HepG2 (cell line): ENCODE measurements at regions of chr5 and their contacts with region 1.

Region 1: DNA sequence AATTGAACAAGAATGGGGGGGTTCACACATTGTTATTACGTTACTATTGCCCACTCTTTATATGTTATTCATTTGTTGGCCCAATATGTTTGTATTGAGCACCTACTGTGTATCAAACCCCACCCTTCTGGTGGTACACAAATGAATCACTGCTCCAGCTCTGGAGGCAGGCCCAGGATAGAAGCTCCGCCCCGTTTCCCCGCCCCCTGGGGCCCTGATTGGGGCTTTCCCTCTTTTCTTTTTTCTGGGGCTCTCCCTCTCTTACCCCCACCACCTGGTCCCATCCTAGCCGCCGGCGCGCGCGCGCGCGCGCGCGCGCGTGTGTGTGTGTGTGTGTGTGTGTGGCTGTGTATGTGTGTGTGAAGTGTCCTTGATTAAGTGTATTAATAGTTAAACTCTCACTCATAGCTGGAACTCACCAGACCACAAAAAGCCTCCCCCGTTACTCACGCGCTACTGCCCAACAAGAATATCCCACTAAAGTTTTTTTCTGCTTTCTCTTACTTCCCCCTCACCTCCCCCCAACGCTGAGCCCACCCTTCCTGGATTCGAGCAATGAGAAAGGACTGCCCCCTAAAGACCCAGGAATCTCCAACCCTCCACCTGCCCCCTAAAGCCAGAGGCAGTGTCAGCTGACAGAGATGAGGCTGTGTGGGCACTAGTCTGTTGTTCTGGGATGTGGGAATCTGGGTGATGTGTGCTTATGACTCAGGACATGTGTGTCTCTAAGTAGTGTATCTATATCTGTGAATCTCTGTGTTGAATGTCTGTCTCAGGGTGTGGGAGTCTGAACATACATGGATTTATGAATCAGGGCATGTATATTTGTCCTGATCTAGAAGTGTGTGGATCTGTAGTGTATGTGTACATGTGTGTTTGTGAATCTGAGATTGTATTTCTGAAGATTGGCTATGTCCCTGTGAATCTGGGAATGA is 4.0 kb downstream of the CXXC5 start:
- DNase-seq: no peak
- ATAC-seq: no peak
- H3K4me3 ChIP-seq: peak overlapping the region; percentile 41 to 74 (median 57); a peak in 4 of 6 replicates
- H3K27ac ChIP-seq: peak overlapping the region; percentile 49
- H3K4me1 ChIP-seq: peaks cover 67% of the 10 kb centered on the region
- H3K27me3 ChIP-seq: no peaks in the 10 kb centered on the region; a peak in 1 of 5 replicates
- CTCF ChIP-seq: no peak
- EP300 ChIP-seq: no peak
- POLR2A ChIP-seq: no peak
- RAD21 ChIP-seq: no peak

Region 2: GRCh38 chr5:139664086-139664693 is 12.1 kb after region 1 on chr5:
- CTCF ChIA-PET with region 1: no interaction called
- POLR2A ChIA-PET with region 1: interaction called, 12 read pairs
- in situ Hi-C with region 1: no loop called
- intact Hi-C with region 1: no loop called
- DNase-seq: no peak
- ATAC-seq: no peak
- H3K4me3 ChIP-seq: no peak overlapping the region
- H3K27ac ChIP-seq: no peak overlapping the region
- H3K4me1 ChIP-seq: peaks cover 53% of the 10 kb centered on the region
- H3K27me3 ChIP-seq: no peaks in the 10 kb centered on the region
- CTCF ChIP-seq: no peak
- EP300 ChIP-seq: no peak
- POLR2A ChIP-seq: no peak
- RAD21 ChIP-seq: no peak

Region 3: GRCh38 chr5:139670369-139671095 is 18.4 kb after region 1 on chr5:
- CTCF ChIA-PET with region 1: no interaction called
- POLR2A ChIA-PET with region 1: interaction called, 12 read pairs
- in situ Hi-C with region 1: no loop called
- intact Hi-C with region 1: loop called (anchors 1 kb)
- DNase-seq: peak; percentile 45
- ATAC-seq: peak; percentile 58
- H3K4me3 ChIP-seq: peak overlapping the region in 1 of 3 experiments; percentile 47; a peak in 3 of 6 replicates
- H3K27ac ChIP-seq: peak overlapping the region; percentile 56
- H3K4me1 ChIP-seq: peaks cover 66% of the 10 kb centered on the region
- H3K27me3 ChIP-seq: no peaks in the 10 kb centered on the region
- CTCF ChIP-seq: peak; percentile 67
- EP300 ChIP-seq: no peak
- POLR2A ChIP-seq: no peak
- RAD21 ChIP-seq: no peak

Region 4: DNA sequence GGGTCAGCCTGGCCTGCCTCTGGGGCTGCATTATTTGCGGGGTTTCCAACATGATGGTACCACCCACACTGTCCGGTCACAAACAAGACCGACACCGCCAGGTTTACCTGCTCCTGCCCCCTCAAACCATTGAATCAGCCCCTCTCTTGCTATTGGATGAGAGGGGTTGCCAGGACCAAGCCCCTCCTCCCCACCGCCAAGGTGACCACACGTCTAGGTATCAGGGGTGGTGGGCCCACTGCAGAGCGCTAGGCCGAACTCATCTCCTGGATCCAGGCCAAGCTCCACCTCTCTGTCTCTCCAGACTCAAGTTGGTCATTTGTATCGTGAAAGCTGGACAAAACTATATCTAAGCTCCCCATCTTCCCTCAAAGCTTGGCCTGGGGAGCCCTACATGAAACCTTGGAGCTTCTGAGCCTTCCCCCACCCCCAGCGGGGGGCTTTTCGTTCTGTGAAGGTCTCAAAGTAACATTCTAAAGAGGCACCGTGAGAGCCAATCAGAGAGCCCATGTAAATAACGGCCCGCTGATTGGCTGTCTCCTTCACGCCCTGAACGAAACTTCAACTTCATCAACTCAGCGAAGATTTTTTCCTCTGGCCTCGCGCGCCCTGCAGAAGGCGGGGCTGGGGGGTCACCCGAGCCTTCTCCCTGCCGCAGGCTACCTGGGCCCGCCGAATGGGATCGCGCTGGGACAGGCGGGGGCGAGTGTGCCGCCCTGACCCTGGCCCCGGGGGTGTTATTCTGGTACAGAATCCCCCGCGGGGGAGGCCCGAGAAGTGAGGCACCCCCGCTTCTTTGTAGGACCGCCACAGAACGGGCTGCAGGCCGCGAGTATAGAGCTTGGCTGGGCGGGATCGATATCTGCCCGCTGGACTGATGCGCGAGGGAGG is 93.9 kb after region 1 on chr5:
- CTCF ChIA-PET with region 1: no interaction called
- POLR2A ChIA-PET with region 1: interaction called, 9 read pairs
- in situ Hi-C with region 1: no loop called
- intact Hi-C with region 1: loop called (anchors 5 kb)
- DNase-seq: peak; percentile 85
- ATAC-seq: peak; percentile 77
- H3K4me3 ChIP-seq: peak overlapping the region; percentile 49 to 73 (median 55); a peak in 5 of 6 replicates
- H3K27ac ChIP-seq: peak overlapping the region; percentile 14
- H3K4me1 ChIP-seq: peaks cover 88% of the 10 kb centered on the region
- H3K27me3 ChIP-seq: peaks cover 0 to 14% of the 10 kb centered on the region in 2 experiments; a peak in 2 of 5 replicates
- CTCF ChIP-seq: no peak
- EP300 ChIP-seq: no peak
- POLR2A ChIP-seq: no peak
- RAD21 ChIP-seq: no peak

Region 5: GRCh38 chr5:139765409-139766217 is 113.5 kb after region 1 on chr5:
- CTCF ChIA-PET with region 1: interaction called, 4 read pairs
- POLR2A ChIA-PET with region 1: interaction called, 3 read pairs
- in situ Hi-C with region 1: loop called (anchors 5 kb)
- intact Hi-C with region 1: no loop called
- DNase-seq: peak; percentile 55
- ATAC-seq: peak; percentile 83
- H3K4me3 ChIP-seq: peak overlapping the region; percentile 62 to 78 (median 69)
- H3K27ac ChIP-seq: no peak overlapping the region
- H3K4me1 ChIP-seq: peaks cover 78% of the 10 kb centered on the region
- H3K27me3 ChIP-seq: peaks cover 0 to 13% of the 10 kb centered on the region in 2 experiments; a peak in 4 of 5 replicates
- CTCF ChIP-seq: peak; percentile 97
- EP300 ChIP-seq: no peak
- POLR2A ChIP-seq: no peak
- RAD21 ChIP-seq: peak; percentile 98